Activated CD4-positive, alpha-beta memory T cell treated with anti-CD3 and anti-CD28 coated beads for 36 hours (primary cell): ENCODE measurements at regions of chr22 and their contacts with region 1.

Region 1: DNA sequence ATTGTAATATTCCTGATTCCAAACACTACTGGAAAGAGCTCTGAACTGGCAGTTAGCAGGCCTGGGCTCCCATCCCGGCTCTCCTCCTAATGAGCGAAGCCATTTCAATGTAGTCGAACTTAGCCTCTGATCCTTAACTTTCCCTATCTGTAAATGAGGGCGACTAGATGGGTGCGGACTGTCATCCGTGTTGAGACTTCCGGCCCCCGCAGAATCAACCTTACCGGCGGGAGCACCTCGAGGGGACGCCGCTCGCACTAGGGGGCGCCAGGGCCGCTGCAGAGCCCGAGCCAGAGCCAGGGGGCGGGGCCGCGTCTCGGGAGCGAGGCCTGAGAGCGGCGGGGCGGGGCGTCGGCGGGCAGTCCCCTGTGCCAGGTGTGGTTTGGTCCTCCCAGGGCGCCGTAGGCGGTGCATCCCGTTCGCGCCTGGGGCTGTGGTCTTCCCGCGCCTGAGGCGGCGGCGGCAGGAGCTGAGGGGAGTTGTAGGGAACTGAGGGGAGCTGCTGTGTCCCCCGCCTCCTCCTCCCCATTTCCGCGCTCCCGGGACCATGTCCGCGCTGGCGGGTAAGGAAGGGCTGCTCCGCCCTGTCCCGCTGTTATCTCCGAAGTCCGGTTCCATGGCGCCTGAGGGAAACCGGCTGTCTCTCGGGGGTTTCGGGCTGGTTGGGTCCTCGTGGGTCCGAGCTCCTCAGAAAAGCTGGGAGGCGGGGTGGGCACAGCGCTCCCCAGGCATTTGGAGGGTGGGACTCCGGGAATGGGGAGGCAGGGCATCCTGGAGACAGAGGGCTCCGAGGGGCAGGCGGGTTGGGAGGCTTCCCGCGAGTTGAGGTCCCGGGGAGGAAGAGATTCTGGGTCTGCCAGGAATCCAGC is at the start of gene LIMK2:
- DNase-seq: peak; percentile 98
- H3K4me3 Mint-ChIP-seq: peak within 1 kb of the TSS; percentile 83
- H3K27ac Mint-ChIP-seq: peak within 1 kb of the TSS; percentile 87
- H3K4me1 Mint-ChIP-seq: peaks cover 53% of the 10 kb centered on the region
- H3K27me3 Mint-ChIP-seq: no peaks in the 10 kb centered on the region
- total RNA-seq, gene LIMK2: 42.0 to 44.7 TPM

Region 2: GRCh38 chr22:31223786-31224191 is 11.7 kb after region 1 on chr22:
- CTCF ChIA-PET with region 1: interaction called, 47 read pairs
- POLR2A ChIA-PET with region 1: interaction called, 7 read pairs
- intact Hi-C with region 1: no loop called
- DNase-seq: no peak
- H3K4me3 Mint-ChIP-seq: no peak overlapping the region
- H3K27ac Mint-ChIP-seq: no peak overlapping the region
- H3K4me1 Mint-ChIP-seq: peaks cover 34% of the 10 kb centered on the region
- H3K27me3 Mint-ChIP-seq: no peaks in the 10 kb centered on the region

Region 3: DNA sequence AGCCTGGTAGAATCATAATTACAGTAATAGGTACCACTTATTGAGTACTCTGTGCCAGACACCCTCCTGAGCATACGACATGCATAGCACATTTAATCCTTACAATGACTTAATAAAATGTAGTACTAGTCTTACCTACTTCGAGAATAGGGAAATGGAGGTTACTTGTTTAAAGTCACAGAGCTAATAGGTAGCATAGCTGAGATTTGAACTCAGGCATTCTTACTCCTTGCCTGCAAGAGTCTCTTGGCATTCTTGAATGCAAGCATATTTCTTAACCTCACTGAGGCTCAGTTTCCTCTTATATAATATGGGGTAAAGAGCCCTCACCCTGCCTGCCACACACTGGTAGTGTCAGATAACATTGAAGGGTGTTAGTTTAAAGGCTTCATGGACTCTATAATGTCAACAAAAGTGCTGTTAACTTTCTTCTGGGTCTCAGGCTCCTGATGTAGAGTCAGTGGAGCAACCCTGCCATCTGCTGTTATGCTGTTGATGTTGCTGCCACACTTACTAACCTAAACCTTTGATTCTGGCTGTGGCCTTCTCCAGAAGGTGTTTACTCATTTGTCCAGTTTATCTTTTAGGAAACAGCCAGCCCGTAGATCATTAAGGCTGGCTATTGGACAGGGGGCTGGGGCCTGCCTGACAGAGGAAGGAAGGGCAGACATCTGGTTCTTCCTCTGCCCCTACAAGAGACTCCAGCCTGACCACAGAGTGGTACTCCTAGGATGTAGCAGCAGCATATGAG is 18.9 kb after region 1 on chr22:
- CTCF ChIA-PET with region 1: interaction called, 47 read pairs
- POLR2A ChIA-PET with region 1: interaction called, 3 read pairs
- intact Hi-C with region 1: no loop called
- DNase-seq: peak; percentile 48
- H3K4me3 Mint-ChIP-seq: no peak overlapping the region
- H3K27ac Mint-ChIP-seq: peak overlapping the region; percentile 0
- H3K4me1 Mint-ChIP-seq: peaks cover 38% of the 10 kb centered on the region
- H3K27me3 Mint-ChIP-seq: no peaks in the 10 kb centered on the region